ENCODE measurements at regions of chr21 and their contacts with region 1.

Region 1: DNA sequence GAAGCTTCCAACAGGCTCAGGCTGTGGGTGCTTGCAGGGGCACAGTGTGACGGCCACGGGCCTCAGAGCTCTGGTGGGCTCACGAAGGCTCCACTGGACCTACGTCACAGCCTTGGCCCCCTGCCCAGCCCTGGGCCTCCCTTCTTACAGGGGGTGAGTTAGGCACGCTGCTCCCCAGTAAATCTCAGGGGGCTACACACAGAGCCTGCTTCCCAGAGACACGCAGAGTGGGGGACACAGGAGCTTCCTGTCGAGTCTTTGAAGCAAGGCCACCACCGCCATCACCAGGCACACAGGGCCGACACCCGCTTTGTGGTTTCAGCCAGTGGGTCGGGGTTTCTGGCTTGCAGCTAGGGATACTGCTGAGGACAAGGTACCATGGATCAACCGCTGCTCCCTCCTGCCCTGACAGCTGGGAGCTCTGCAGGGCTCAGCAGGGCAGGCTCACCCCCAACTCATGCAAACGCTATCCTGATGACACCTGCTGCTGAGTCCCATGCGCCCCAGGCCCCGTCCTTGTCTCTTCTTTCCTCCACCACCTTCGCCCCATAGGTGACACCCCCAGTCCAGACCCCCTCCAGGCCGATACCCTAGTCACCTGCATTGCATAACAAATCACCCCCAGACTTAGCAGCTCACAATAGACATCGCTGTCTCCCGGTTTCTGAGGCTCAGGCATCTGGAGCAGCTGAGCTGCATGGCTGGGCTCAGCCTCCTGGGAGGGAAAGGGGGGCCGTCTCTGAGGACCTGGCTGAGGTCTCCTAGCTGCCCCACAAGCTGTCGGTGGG is 5.5 kb upstream of the CFAP410 start:
- DNase-seq: no peak
- H3K4me3 ChIP-seq: no peak overlapping the region
- H3K27ac ChIP-seq: no peak overlapping the region
- H3K4me1 ChIP-seq: no peaks in the 10 kb centered on the region; a peak in 2 of 7 replicates
- H3K27me3 ChIP-seq: peaks cover 6 to 11% (median 9%) of the 10 kb centered on the region in 4 experiments; a peak in 6 of 7 replicates
- CTCF ChIP-seq: no peak
- EP300 ChIP-seq: no peak
- POLR2A ChIP-seq: no peak
- RAD21 ChIP-seq: no peak

Region 2: GRCh38 chr21:44331650-44332307 is 13.0 kb before region 1 on chr21:
- CTCF ChIA-PET with region 1: interaction called, 4 read pairs
- POLR2A ChIA-PET with region 1: interaction called, 11 read pairs
- DNase-seq: no peak
- H3K4me3 ChIP-seq: no peak overlapping the region
- H3K27ac ChIP-seq: no peak overlapping the region
- H3K4me1 ChIP-seq: no peaks in the 10 kb centered on the region
- H3K27me3 ChIP-seq: no peaks in the 10 kb centered on the region
- CTCF ChIP-seq: no peak
- EP300 ChIP-seq: no peak
- POLR2A ChIP-seq: no peak
- RAD21 ChIP-seq: no peak

Region 3: DNA sequence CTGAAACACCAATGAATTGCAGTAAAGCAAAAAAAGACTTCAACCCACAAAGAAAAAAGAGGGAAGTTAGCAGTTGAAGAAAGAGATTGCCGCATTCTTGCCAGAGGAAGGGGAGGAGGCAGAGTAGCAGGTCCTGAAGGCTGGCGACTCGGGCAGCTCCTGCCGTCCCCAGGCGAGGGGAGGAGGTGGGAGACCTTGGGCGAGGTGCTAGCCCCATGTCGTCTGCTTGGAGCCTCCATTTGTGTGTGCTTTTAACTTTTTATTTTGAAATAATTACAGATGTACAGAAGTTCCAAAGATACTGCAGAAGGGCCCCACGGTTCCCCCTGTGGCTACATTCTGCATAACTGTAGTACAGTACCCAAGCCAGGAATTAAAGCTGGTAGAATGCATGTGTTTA is 15.4 kb after region 1 on chr21:
- CTCF ChIA-PET with region 1: interaction called, 11 read pairs
- POLR2A ChIA-PET with region 1: interaction called, 7 read pairs
- DNase-seq: no peak
- H3K4me3 ChIP-seq: no peak overlapping the region
- H3K27ac ChIP-seq: no peak overlapping the region
- H3K4me1 ChIP-seq: no peaks in the 10 kb centered on the region; a peak in 1 of 7 replicates
- H3K27me3 ChIP-seq: no peaks in the 10 kb centered on the region; a peak in 1 of 7 replicates
- CTCF ChIP-seq: no peak
- EP300 ChIP-seq: no peak
- POLR2A ChIP-seq: no peak
- RAD21 ChIP-seq: no peak